CD4-positive, alpha-beta T cell (primary cell): ENCODE measurements at regions of chr2 and their contacts with region 1.

Region 1: DNA sequence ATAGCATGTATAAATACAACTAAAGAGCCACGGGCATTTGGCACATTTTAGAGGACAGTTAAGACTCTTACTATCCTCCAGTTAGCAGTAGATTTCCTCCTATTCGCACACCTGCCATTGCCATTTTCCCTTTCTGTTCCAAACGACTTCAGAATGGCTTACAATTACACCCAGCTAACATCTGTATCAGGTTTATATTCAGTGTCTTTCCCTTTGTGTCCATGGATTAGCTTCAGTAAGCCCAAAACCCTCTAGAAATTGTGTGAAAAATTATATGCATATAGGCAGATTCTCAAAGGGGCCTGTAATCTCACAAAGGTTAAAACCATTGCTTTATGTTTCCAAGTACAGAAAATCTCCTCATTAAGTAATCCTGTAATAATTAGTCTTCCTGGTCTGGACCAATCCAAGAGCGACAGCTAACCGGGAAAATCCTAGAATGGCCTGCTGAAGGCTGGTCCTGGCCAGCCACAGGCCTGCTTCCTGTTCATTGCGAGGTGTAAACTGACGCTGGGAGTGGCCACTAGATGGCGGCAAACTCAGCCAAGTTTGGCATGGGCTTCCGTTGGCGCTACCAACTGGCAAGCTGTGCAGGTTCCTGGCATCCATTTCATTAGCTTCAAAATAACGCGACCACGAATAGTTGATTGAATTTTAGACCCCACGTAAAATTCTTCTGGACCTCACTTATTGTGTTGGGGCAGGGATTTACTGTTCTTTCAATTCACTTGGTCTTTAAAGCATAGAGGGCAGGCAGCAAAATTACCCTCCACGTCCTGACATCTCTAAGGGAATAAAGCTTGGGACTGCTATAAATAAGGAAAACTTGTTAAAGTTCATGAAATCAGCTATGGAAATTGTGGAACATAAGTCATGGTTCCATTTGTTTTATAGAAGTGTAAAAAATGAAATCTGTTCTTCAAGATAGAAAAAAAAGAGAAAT is 17.1 kb downstream of the ARHGAP25 start:
- DNase-seq: peak; percentile 88 to 96 (median 90)
- ATAC-seq: peak; percentile 91
- H3K4me3 ChIP-seq: no peak overlapping the region
- H3K4me3 Mint-ChIP-seq: peak overlapping the region; percentile 12
- H3K27ac ChIP-seq: peak overlapping the region; percentile 52 to 66
- H3K27ac Mint-ChIP-seq: peak overlapping the region; percentile 94
- H3K4me1 ChIP-seq: peaks cover 81% of the 10 kb centered on the region
- H3K4me1 Mint-ChIP-seq: peaks cover 86% of the 10 kb centered on the region
- H3K27me3 ChIP-seq: no peaks in the 10 kb centered on the region
- H3K27me3 Mint-ChIP-seq: no peaks in the 10 kb centered on the region
- CTCF ChIP-seq: peak; percentile 93

Region 2: GRCh38 chr2:68709421-68709911 is 42.2 kb before region 1 on chr2:
- CTCF ChIA-PET with region 1: interaction called, 19 read pairs
- POLR2A ChIA-PET with region 1: interaction called, 12 read pairs
- intact Hi-C with region 1: loop called in 1 of 2 experiments (anchors 5 kb)
- DNase-seq: peak in 4 of 14 experiments; percentile 36 to 62 (median 58)
- ATAC-seq: peak; percentile 77
- H3K4me3 ChIP-seq: no peak overlapping the region
- H3K4me3 Mint-ChIP-seq: no peak overlapping the region
- H3K27ac ChIP-seq: no peak overlapping the region
- H3K27ac Mint-ChIP-seq: no peak overlapping the region
- H3K4me1 ChIP-seq: peaks cover 6% of the 10 kb centered on the region
- H3K4me1 Mint-ChIP-seq: peaks cover 28% of the 10 kb centered on the region
- H3K27me3 ChIP-seq: no peaks in the 10 kb centered on the region
- H3K27me3 Mint-ChIP-seq: no peaks in the 10 kb centered on the region
- CTCF ChIP-seq: peak; percentile 92

Region 3: GRCh38 chr2:68726608-68727367 is 24.9 kb before region 1 on chr2:
- CTCF ChIA-PET with region 1: interaction called, 35 read pairs
- POLR2A ChIA-PET with region 1: interaction called, 26 read pairs
- intact Hi-C with region 1: no loop called
- DNase-seq: peak; percentile 52 to 92 (median 74)
- ATAC-seq: peak; percentile 97
- H3K4me3 ChIP-seq: no peak overlapping the region
- H3K4me3 Mint-ChIP-seq: peak overlapping the region; percentile 46
- H3K27ac ChIP-seq: peak overlapping the region; percentile 10 to 42
- H3K27ac Mint-ChIP-seq: peak overlapping the region; percentile 88
- H3K4me1 ChIP-seq: peaks cover 63% of the 10 kb centered on the region
- H3K4me1 Mint-ChIP-seq: peaks cover 78% of the 10 kb centered on the region
- H3K27me3 ChIP-seq: no peaks in the 10 kb centered on the region
- H3K27me3 Mint-ChIP-seq: no peaks in the 10 kb centered on the region
- CTCF ChIP-seq: no peak

Region 4: DNA sequence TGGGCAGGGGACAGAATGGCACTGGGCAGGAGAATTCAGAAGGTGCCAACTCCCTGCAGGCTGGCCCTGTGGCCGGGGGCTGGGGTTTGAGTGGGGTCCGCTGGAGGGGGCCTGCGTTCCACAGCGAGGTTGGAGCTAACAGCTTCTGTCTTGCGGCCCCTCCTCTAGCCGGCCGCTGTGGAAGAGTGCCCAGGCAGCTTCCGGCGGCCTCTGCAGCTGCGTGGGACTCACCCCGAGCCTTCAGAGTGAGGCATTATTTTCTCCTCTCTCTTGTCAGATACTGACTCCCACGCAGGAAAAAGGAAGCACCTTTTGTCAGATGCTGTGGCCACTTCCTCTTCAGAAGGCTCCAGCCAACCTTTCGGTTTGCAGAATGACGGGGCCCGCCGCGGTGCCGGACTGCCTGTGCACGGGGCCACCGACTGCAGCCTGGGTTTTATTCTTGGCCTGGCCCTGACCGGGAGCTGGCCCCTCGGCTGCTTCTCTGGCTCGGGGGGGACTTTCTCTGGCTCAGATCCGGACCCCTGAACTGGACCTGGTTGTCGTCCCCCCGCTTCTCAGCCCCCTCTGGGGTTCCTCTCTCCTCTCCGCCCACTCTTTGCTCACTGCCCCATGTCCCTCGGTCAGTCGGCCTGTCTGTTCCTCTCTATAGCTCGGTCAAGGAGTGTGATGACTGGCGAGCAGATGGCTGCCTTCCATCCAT is 23.1 kb after region 1 on chr2:
- CTCF ChIA-PET with region 1: interaction called, 40 read pairs
- POLR2A ChIA-PET with region 1: interaction called, 238 read pairs
- intact Hi-C with region 1: loop called in 1 of 2 experiments (anchors 2 kb)
- DNase-seq: peak in 12 of 14 experiments; percentile 26 to 87 (median 48)
- ATAC-seq: peak; percentile 59
- H3K4me3 ChIP-seq: peak overlapping the region; percentile 66
- H3K4me3 Mint-ChIP-seq: peak overlapping the region; percentile 88
- H3K27ac ChIP-seq: peak overlapping the region; percentile 81 to 89
- H3K27ac Mint-ChIP-seq: peak overlapping the region; percentile 94
- H3K4me1 ChIP-seq: peaks cover 86% of the 10 kb centered on the region
- H3K4me1 Mint-ChIP-seq: peaks cover 91% of the 10 kb centered on the region
- H3K27me3 ChIP-seq: no peaks in the 10 kb centered on the region
- H3K27me3 Mint-ChIP-seq: no peaks in the 10 kb centered on the region
- CTCF ChIP-seq: no peak

Region 5: DNA sequence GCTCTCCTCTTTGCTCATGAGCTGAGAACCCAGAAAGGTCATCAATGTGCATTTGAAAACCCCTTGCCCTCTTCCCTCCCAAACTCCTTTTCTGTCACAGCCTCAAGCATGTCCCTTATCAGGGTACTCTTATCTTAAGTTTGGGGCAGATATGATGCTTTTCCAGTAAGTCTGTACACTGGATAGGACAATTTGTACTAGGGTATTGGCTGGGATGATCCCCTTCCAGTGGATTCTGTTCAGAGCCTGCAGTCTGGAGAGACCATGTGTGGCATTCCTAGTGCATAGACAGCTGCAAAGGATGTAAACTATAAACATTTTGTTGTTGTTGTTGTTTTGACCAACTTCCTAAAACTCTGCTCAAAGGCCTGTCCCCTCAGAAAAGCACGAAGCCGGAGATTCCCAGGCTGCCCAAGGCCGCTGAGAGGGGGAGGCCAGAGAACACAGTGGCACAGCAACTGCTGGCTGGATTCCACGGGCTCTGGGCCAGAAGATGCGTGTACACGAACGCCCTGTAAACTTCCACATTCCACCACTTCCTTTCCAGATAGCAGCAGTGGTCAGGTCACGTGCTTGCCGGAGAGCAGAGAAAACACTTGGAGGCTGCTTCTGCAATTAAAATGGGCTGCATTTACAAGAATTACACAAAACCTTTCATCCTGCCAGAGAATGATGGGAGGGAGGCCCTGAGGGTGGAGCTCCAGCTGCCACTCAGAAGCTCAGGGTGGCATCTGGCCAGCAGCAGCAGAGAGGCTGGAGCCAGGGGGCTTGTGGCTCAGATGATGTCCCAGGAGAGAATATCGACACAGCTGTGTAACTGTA is 77.4 kb after region 1 on chr2:
- CTCF ChIA-PET with region 1: interaction called, 24 read pairs
- POLR2A ChIA-PET with region 1: interaction called, 20 read pairs
- intact Hi-C with region 1: no loop called
- DNase-seq: peak; percentile 40 to 91 (median 64)
- ATAC-seq: peak; percentile 86
- H3K4me3 ChIP-seq: no peak overlapping the region
- H3K4me3 Mint-ChIP-seq: peak overlapping the region; percentile 68
- H3K27ac ChIP-seq: peak overlapping the region; percentile 69 to 70
- H3K27ac Mint-ChIP-seq: peak overlapping the region; percentile 87
- H3K4me1 ChIP-seq: peaks cover 44% of the 10 kb centered on the region
- H3K4me1 Mint-ChIP-seq: peaks cover 74% of the 10 kb centered on the region
- H3K27me3 ChIP-seq: no peaks in the 10 kb centered on the region
- H3K27me3 Mint-ChIP-seq: no peaks in the 10 kb centered on the region
- CTCF ChIP-seq: no peak

Region 6: GRCh38 chr2:68925295-68925896 is 173.7 kb after region 1 on chr2:
- CTCF ChIA-PET with region 1: interaction called, 18 read pairs
- POLR2A ChIA-PET with region 1: interaction called, 4 read pairs
- intact Hi-C with region 1: loop called in 1 of 2 experiments (anchors 1 kb)
- DNase-seq: peak; percentile 25 to 83 (median 44)
- ATAC-seq: peak; percentile 90
- H3K4me3 ChIP-seq: no peak overlapping the region
- H3K4me3 Mint-ChIP-seq: no peak overlapping the region
- H3K27ac ChIP-seq: no peak overlapping the region
- H3K27ac Mint-ChIP-seq: no peak overlapping the region
- H3K4me1 ChIP-seq: no peaks in the 10 kb centered on the region
- H3K4me1 Mint-ChIP-seq: peaks cover 7% of the 10 kb centered on the region
- H3K27me3 ChIP-seq: no peaks in the 10 kb centered on the region
- H3K27me3 Mint-ChIP-seq: peaks cover 6% of the 10 kb centered on the region
- CTCF ChIP-seq: peak; percentile 97